Right ventricle myocardium superior (tissue), 1 donor: ENCODE measurements at regions of chr9 and their contacts with region 1.

Region 1: GRCh38 chr9:121331992-121332685 is 37.9 kb downstream of the STOM start:
- DNase-seq: no peak
- ATAC-seq: peak; percentile 2

Region 2: DNA sequence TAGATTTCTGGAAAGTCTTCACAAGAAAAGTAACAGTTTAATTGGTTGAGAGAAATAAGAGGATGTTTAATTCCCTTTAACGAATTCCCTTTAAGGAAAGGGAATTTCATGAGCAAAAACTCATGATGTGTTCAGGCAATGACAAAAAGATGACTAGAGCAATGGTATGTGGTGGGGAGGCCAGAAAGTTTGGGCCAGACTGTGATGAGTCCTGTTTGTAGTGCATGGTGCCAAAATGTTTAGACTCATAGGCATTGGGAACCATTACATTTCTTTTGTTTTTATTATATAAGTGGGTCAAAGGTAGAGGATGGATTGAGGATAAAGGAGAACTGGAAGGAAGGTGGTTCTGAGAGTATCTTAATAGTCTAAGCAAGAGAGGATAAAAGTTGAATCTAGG is 246.5 kb before region 1 on chr9:
- intact Hi-C with region 1: no loop called
- DNase-seq: no peak
- ATAC-seq: no peak

Region 3: DNA sequence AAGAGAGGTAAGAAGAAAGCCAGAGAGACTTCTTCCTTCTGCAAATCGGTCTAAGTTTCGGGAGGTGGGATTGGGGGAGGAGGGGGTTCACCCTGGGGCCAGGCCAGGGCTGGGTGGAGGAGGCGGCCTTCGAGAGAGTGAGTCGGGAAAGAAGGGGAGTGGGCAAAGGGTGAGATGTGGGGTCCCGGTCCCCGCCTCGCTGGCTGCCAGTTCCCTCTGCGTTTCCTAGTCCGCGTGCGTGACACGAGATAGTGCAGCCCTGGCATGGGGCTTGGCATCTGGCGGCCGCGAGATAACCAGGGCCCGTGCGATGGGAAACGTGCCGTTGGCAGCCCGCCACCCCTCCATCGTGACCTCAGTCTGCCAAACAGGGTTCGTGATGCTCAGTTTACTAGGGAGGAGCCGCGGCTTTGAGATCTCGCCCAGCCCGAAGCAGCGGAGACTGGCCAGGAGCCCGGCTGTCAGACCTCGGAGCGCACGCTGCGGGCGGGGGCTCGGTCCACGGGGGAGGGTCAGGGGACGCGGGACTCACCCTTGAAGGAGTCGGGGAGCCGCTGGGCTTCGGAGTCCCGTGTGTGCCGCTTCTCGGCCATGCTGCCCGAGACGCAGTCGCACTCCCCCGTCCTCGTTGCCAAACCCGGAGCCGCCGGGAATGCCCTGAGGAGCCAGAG is 37.6 kb after region 1 on chr9 and contains the start of gene STOM:
- intact Hi-C with region 1: loop called (anchors 5 kb)
- DNase-seq: peak; percentile 94
- ATAC-seq: peak; percentile 79
- total RNA-seq, gene STOM: 155 TPM